Mammary epithelial cell (primary cell): ENCODE measurements at regions of chr22 and their contacts with region 1.

Region 1: DNA sequence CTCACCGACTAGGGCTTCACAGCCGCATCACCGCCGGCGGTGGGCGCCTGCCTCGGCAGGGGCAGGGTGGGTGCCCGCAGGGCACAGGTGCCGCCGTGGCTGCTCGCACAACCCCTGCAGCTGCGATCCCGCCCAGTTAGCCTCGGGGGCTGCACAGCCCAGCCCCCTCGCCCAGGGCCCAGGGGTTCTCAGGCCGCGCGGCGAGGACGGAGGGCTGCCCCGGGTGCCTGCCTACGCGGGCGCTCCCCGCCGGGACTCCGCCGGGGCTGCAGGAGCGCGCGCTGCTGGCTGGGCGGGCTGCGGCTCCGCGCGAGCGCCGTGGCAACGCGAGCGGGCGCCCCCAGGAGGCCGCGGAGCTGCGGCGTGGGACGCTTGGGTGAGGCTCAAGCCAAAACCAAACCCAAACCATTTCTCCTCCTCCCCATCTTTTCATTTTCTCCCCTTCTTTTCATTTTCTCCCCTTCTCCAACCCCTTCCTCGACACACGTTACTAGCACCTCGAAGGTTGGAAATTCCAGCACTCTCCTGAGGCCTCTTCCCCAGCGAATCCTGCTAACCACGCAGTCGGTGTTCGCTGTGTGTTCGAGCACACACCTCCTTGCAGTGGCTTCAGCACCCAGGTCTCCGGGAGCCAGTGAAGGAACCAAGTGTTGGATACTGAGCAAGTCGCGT is at the start of gene MICAL3:
- DNase-seq: peak; percentile 68
- H3K4me3 ChIP-seq: peak within 1 kb of the TSS; percentile 67 to 74 (median 70)
- H3K27ac ChIP-seq: peak within 1 kb of the TSS; percentile 80
- H3K4me1 ChIP-seq: peaks cover 41% of the 10 kb centered on the region
- H3K27me3 ChIP-seq: no peaks in the 10 kb centered on the region
- CTCF ChIP-seq: peak; percentile 45 to 62
- total RNA-seq, gene MICAL3: 67.2 to 102 TPM

Region 2: DNA sequence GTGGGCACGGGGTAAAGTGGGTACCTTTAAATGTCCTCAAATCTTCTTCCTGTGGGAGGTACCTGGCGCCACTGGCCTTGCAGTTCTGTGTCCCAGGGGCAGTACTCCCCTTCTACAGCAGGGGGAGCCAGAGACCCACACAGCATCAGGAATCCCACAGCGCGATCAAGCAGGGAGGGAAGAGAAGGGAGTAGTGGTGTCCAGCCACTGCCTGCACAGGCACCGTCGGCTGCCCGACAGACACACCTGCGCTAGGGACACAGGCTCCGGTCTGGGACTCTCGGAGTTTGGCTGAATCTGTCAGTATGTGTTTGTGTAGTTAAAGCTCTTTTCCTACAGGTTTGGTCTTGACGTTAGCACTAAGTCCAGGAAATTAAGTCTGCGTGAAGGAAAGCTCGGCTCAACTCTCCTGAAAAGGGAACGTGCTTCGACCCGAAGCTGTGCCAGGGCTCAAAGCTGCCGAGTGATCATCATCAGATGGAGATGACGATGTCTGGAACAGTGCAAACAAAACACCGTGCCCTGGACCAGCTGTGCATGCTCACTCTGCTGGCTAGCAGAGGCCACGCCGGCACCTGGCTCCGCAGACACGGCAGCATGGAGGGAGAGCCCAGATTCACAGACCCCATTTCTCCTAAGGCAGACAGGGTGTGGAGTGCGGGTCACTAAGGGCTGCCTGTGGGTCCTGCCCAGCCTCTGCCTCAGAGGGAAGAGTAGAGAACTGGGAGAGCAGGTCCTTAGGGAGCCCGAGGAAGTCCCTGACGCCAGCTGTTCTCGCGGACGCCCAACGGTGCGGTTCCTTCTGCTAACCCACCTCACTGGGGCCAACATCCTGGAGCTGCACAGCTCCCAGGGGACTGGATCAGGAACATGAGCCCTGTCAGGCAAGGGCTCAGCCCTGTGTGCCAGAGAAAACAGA is 194.1 kb before region 1 on chr22:
- CTCF ChIA-PET with region 1: no interaction called
- dilution Hi-C with region 1: no loop called
- in situ Hi-C with region 1: no loop called
- intact Hi-C with region 1: loop called (anchors 1 kb)
- DNase-seq: peak; percentile 79
- H3K4me3 ChIP-seq: no peak overlapping the region
- H3K27ac ChIP-seq: no peak overlapping the region
- H3K4me1 ChIP-seq: peaks cover 11% of the 10 kb centered on the region
- H3K27me3 ChIP-seq: no peaks in the 10 kb centered on the region
- CTCF ChIP-seq: peak; percentile 100

Region 3: DNA sequence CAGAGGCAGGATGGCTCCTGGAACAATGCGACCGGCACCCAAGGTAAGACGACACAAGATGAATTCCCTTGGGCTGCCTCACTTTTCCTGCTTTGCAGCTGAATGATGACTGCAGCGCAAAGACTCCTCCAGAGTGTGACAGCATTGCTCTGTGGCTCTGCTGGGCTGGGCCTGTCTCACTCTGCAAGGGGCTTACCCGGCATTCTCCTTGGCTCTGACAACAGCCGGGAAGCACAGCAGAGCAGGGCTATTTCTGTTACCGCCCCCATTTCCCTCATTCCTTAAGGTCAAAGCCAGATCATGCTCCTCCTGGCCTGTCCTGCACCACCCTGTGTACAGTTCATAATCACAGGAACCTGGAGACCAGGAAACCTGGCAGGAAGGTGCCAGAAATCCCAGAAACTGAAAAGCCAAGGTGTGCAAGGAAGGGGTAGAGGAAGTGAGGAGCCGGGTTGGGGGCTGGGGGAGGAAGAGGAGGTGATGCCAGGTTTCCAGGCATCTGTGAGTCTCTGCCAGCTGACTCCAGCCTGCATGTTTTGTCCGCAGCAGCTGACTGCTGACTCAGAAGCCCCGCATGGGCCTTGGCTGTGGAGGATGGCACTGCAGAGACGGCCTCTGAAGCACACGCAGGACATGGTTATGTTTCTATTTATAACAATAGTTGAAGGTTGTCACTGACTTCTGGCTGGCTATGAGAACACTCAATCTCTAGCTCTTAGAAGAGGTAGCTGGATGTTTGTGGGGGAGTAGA is 113.7 kb before region 1 on chr22:
- CTCF ChIA-PET with region 1: no interaction called
- dilution Hi-C with region 1: no loop called
- in situ Hi-C with region 1: no loop called
- intact Hi-C with region 1: loop called (anchors 5 kb)
- DNase-seq: peak; percentile 70
- H3K4me3 ChIP-seq: no peak overlapping the region
- H3K27ac ChIP-seq: peak overlapping the region; percentile 14
- H3K4me1 ChIP-seq: peaks cover 21% of the 10 kb centered on the region
- H3K27me3 ChIP-seq: no peaks in the 10 kb centered on the region
- CTCF ChIP-seq: peak; percentile 36 to 57

Region 4: DNA sequence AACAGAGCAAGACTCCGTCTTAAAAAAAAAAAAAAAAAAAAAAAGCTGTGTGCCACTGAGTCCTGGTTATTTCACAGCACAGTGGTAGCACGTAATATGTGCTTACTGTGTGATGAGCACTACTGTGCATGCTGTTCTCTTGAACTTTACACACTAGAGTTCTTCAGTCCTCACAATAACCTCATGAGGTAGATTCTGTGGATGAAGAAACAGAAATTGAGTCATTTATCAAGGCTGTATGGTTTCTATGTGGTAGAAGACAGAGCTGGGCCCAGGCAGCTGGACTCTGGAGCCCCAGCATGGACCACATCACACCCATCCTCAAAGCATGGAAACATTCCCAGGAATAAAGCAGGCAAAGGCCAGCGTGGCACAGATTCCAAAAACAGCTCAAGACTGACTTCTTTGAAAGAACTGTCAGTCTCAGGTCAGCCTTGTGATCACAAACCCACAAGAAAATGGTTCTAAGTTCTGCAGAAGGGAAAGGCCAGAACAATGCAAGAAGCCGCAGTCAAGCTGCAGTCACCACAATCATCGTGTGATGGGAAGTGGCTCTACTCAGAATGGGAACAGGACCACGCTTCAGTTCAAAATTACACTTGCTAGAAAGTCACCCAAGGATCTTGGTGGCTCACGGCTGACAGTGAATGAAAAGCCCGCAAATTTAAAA is 49.6 kb before region 1 on chr22:
- CTCF ChIA-PET with region 1: interaction called, 31 read pairs
- dilution Hi-C with region 1: no loop called
- in situ Hi-C with region 1: no loop called
- intact Hi-C with region 1: no loop called
- DNase-seq: no peak
- H3K4me3 ChIP-seq: no peak overlapping the region
- H3K27ac ChIP-seq: no peak overlapping the region
- H3K4me1 ChIP-seq: peaks cover 32% of the 10 kb centered on the region
- H3K27me3 ChIP-seq: no peaks in the 10 kb centered on the region
- CTCF ChIP-seq: no peak

Region 5: GRCh38 chr22:17988800-17989513 is 35.5 kb before region 1 on chr22:
- CTCF ChIA-PET with region 1: interaction called, 4 read pairs
- dilution Hi-C with region 1: loop called (anchors 5 kb)
- in situ Hi-C with region 1: no loop called
- intact Hi-C with region 1: no loop called
- DNase-seq: no peak
- H3K4me3 ChIP-seq: no peak overlapping the region
- H3K27ac ChIP-seq: no peak overlapping the region
- H3K4me1 ChIP-seq: peaks cover 46% of the 10 kb centered on the region
- H3K27me3 ChIP-seq: no peaks in the 10 kb centered on the region
- CTCF ChIP-seq: no peak

Region 6: GRCh38 chr22:18060646-18061620 is 36.5 kb after region 1 on chr22:
- CTCF ChIA-PET with region 1: no interaction called
- dilution Hi-C with region 1: no loop called
- in situ Hi-C with region 1: no loop called
- intact Hi-C with region 1: loop called (anchors 5 kb)
- DNase-seq: peak; percentile 90
- H3K4me3 ChIP-seq: no peak overlapping the region
- H3K27ac ChIP-seq: peak overlapping the region; percentile 57
- H3K4me1 ChIP-seq: peaks cover 70% of the 10 kb centered on the region
- H3K27me3 ChIP-seq: no peaks in the 10 kb centered on the region
- CTCF ChIP-seq: no peak